ENCODE measurements at regions of chr11 and their contacts with region 1.

Region 1: DNA sequence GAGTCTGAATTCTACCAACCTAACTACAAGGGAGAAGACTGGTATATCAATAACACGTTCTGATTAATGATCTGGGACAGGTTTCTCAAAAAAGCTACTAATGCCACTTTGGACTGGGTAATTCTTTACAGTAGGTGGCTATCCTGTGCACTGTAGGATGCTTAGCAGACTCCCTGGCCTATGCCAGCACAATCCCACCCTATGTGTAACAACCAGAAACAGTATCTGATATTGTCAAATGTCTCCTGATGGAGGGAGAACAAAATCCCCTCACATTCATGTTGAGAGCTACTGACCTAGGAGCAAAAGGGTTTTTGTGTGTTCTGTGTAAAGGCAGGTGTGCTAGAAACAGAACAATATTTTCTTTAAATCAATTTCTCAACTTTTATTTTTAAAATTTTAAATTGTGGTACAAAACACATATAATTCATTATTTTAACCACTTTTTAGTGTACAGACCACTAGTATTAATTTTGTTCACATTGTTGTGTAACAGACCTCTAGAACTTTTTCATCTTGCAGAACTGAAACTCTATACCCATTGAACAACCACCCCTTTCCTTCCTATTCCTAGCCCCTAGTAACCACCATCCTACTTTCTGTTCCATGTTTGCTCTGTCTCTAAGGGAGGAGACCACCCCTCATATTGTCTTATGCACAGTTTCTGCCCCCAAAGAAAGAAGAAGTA is 2.1 kb upstream of the MS4A6A start:
- H3K4me3 Mint-ChIP-seq: peak overlapping the region; percentile 78
- H3K27ac Mint-ChIP-seq: peak overlapping the region; percentile 87
- H3K4me1 Mint-ChIP-seq: peaks cover 67% of the 10 kb centered on the region
- H3K27me3 Mint-ChIP-seq: no peaks in the 10 kb centered on the region

Region 2: DNA sequence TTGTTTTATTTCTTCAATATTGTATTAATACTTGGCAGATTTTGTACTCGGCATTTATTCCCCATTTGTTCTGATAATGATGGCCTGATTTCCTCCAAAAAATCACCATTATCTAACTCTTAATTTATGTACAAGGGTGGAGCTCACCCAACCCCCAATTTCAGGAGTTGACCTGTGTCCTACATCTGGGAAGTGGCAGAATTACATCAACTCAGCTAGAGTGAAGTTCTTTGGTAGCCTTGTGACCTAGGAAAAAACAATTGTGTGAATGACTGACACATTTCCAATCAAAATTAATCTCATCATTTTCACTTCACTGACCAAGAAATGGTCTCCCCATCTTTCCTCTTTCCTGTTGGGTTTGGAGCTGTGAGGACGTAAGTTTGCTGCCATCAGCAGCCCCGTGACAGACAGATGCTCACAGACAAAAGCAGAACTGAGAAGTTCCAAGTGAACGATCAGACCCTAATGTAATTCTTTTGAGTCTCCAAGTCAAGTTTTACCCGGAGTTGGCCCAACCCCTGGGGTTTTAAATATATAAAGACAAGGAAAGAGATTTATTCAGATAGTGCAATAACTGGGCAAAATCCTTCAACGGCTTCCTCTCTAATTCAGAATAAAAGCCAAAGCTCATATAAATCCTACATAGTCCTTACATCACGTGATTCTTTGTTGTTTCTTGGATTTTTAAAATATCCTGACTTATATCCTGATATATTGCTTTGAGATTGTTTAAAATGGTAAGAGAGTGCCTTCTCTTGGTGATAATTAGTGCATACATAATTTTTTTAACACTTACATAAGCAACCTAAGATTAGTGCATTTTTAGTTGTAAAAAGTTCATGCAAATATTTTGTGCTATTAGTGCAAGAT is 125.7 kb after region 1 on chr11:
- intact Hi-C with region 1: loop called (anchors 5 kb)
- H3K4me3 Mint-ChIP-seq: peak overlapping the region; percentile 17
- H3K27ac Mint-ChIP-seq: peak overlapping the region; percentile 86
- H3K4me1 Mint-ChIP-seq: peaks cover 57% of the 10 kb centered on the region
- H3K27me3 Mint-ChIP-seq: no peaks in the 10 kb centered on the region